ENCODE measurements at regions of chr20 and their contacts with region 1.

Region 1: DNA sequence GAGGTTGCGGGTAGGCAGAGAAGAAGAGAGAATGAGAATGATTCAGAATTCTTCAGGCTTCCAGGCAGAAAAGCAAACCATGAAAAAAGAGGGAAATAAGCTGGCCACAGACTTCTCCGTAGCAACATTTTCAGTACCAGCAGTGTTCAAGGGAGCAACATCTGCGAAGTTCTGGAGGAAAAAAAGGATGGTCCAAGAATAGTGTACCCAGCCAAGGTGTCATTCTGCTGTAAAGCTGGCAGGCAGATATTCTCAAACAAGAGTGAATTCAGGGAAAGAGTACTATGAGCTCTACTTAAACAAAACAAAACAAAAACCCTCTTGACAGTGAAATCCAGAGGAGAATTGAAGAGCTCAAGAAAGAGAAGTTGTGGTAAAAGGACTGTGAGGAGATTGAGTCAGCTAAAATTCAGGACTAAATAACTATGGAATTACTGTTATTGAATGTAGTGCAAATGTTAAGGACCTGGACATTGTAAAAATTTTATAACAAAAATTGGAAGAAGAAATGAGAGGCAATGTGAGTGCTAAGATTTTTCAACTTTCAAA is 86.5 kb downstream of the ATRN start:
- DNase-seq: no peak
- H3K4me3 Mint-ChIP-seq: no peak overlapping the region
- H3K27ac Mint-ChIP-seq: no peak overlapping the region
- H3K4me1 Mint-ChIP-seq: no peaks in the 10 kb centered on the region
- H3K27me3 Mint-ChIP-seq: no peaks in the 10 kb centered on the region
- CTCF ChIP-seq: no peak

Region 2: DNA sequence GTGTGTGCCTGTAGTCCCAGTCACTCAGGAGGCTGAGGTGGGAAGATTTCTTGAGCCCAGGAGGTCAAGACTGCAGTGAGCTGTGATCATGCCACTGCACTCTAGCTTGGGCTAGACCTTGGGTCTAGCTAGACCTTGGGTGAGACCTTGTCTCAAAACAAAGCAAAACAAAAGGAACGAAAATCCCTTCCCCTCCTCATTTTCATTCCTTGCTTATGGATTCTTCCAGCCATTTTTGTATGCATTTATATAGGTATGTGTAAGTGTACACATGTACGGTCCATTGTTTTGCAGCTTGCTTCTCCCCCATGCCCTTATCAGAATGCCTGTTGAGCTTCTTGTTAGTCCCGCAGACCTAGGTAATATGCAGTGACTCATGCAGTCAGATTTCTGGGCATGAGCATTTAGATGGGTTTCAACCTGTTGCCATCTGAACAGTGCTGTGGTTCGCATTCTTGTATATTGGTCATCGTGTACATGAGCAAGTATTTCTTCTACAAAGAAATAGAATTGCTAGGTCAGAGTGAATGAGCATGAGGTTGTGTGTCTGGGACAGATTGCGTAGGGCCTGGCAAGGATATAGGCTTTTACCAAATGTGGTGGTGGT is 13.3 kb before region 1 on chr20:
- CTCF ChIA-PET with region 1: interaction called, 19 read pairs
- POLR2A ChIA-PET with region 1: interaction called, 12 read pairs
- intact Hi-C with region 1: no loop called
- DNase-seq: peak; percentile 89
- H3K4me3 Mint-ChIP-seq: no peak overlapping the region
- H3K27ac Mint-ChIP-seq: peak overlapping the region; percentile 65
- H3K4me1 Mint-ChIP-seq: peaks cover 16% of the 10 kb centered on the region
- H3K27me3 Mint-ChIP-seq: no peaks in the 10 kb centered on the region
- CTCF ChIP-seq: no peak

Region 3: GRCh38 chr20:3616250-3616649 is 58.9 kb after region 1 on chr20:
- CTCF ChIA-PET with region 1: no interaction called
- POLR2A ChIA-PET with region 1: no interaction called
- intact Hi-C with region 1: no loop called
- DNase-seq: no peak
- H3K4me3 Mint-ChIP-seq: no peak overlapping the region
- H3K27ac Mint-ChIP-seq: no peak overlapping the region
- H3K4me1 Mint-ChIP-seq: peaks cover 6% of the 10 kb centered on the region
- H3K27me3 Mint-ChIP-seq: no peaks in the 10 kb centered on the region
- CTCF ChIP-seq: no peak

Region 4: GRCh38 chr20:3632311-3633004 is 75.1 kb after region 1 on chr20:
- CTCF ChIA-PET with region 1: no interaction called
- POLR2A ChIA-PET with region 1: no interaction called
- intact Hi-C with region 1: no loop called
- DNase-seq: no peak
- H3K4me3 Mint-ChIP-seq: no peak overlapping the region
- H3K27ac Mint-ChIP-seq: no peak overlapping the region
- H3K4me1 Mint-ChIP-seq: no peaks in the 10 kb centered on the region
- H3K27me3 Mint-ChIP-seq: no peaks in the 10 kb centered on the region
- CTCF ChIP-seq: peak; percentile 12

Measured in MCF 10A (cell line).